Posterior cingulate gyrus (tissue), 11 donors: ENCODE measurements at regions of chr3 and their contacts with region 1.

Region 1: DNA sequence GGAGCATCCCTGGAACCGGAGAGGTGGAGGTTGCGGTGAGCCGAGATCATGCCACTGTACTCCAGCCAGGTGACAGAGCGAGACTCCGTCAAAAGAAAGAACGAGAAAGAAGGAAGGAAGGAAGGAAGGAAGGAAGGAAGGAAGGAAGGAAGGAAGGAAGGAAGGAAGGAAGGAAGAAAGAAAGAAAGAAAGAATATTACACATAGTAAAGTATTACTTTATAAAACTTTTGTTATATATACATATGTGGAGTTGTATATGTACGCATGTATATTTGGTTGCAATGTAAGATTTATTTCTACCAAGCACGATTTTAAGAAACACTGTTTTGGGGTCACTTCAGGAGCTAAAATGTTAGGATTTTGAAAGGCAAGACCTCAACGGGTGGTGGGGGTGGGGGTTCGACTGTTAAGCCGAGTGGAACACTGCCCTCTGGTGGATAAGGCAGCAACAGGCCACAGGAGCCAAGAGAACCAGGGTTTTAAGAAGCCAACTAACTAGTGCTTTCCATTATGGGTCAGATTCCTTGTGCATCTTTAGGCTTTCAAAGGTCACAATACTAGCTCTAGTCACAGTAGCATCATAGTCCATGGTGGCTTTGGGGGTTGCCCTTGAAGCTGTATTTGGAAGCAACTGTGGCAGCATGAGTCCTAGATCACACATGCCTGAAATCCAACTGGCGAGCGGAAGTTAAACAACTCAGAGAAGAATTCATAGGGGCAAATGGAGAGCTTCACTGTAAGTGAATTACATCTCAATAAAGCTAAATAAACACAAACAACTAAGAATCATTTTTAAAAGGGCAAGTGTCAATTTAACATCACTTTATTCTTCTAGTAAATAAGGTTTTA is 22.5 kb downstream of the GLB1 start:
- DNase-seq: peak in 8 of 10 donors; percentile 21 to 89 (median 58)

Region 2: GRCh38 chr3:32947789-32948238 is 126.6 kb before region 1 on chr3:
- intact Hi-C with region 1: loop called (anchors 2 kb)
- DNase-seq: peak in 7 of 10 donors; percentile 55 to 90 (median 65)